MCF 10A (cell line): ENCODE measurements at regions of chr12 and their contacts with region 1.

Region 1: GRCh38 chr12:46473634-46474329 is 101.2 kb upstream of the SLC38A2 start:
- DNase-seq: peak; percentile 89
- H3K4me3 Mint-ChIP-seq: peak overlapping the region; percentile 58
- H3K27ac Mint-ChIP-seq: peak overlapping the region; percentile 94
- H3K4me1 Mint-ChIP-seq: peaks cover 44% of the 10 kb centered on the region
- H3K27me3 Mint-ChIP-seq: no peaks in the 10 kb centered on the region
- CTCF ChIP-seq: no peak

Region 2: DNA sequence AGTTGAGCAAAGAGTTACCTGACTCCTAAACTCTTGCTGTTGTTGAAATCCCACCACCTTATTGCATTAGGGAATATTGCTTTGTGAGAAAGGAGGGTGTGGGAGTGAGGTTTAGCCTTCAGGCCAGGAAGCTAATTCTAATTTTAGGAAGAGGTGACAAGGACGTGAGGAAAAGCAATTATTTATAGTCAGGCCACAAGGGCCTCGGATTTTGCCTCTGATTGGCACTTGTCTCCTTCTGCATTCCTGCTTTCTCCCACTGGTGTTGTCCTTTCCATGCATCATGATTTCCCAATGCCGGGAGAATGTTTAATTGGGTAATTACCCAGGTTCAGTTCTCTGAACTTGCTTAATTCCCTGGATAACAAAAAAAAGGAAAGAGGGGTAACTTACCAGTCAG is 63.3 kb before region 1 on chr12:
- CTCF ChIA-PET with region 1: no interaction called
- POLR2A ChIA-PET with region 1: no interaction called
- intact Hi-C with region 1: no loop called
- DNase-seq: peak; percentile 53
- H3K4me3 Mint-ChIP-seq: no peak overlapping the region
- H3K27ac Mint-ChIP-seq: no peak overlapping the region
- H3K4me1 Mint-ChIP-seq: peaks cover 30% of the 10 kb centered on the region
- H3K27me3 Mint-ChIP-seq: no peaks in the 10 kb centered on the region
- CTCF ChIP-seq: no peak

Region 3: DNA sequence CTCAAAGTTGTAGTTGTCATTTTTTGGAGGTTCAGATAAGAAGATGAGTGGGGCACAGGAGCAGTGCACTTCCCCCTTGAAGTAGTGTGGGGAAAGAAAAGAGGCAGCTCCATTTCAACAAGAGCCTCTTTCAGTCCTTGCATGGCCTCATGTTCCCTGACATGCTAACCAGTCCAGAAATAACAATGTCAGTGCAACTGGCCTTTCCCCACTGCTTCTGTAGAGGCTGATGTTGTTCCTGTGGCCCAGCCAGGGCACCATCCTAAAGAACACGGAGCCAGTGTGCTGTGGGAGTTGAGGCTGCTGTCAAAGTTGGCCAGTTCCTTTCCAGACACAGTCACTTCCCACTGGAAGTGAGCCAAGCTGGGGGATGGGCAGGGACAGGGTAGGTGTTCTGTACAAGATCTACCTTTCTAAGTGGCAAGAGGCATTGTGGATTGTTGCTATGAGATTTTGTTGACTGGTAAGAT is 23.5 kb before region 1 on chr12:
- CTCF ChIA-PET with region 1: interaction called, 3 read pairs
- POLR2A ChIA-PET with region 1: interaction called, 22 read pairs
- intact Hi-C with region 1: no loop called
- DNase-seq: peak; percentile 73
- H3K4me3 Mint-ChIP-seq: no peak overlapping the region
- H3K27ac Mint-ChIP-seq: peak overlapping the region; percentile 90
- H3K4me1 Mint-ChIP-seq: peaks cover 64% of the 10 kb centered on the region
- H3K27me3 Mint-ChIP-seq: no peaks in the 10 kb centered on the region
- CTCF ChIP-seq: no peak

Region 4: DNA sequence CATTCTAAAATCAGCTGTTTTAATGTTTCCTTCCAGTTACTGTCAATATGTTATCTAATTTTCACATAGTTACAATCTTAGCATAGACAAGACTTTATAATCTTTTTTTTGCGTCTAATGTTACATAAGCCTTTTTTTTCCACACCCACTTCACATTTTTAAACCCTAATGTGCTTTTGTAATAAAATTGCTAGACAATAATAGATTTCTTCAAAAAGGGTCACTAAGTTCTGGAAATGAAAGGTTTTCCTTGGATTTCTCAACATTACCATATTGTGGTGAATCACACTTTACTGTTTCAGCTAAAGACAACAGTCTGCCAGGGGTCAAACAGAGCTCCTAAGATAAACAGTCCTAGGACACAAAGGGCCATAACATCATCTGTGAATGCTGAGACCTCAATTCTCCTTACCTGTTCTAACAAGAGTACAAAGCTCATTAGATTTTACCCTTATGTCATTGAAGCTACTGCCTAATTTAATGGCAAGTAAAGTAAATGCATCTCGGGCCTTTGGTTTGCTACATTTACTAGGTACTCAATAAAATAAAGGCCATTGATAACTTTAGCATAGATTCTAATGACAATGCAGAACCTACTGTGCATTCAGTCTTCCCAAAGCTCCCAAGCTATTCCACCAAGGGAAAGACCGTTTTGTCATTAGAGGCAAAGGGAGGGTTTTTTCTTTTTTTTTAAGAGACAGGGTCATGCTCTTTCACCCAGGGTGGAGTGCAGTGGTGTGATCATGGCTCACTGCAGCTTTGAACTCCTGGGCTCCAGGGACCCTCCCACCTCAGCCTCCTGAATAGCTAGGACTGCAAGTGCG is 10.0 kb after region 1 on chr12:
- CTCF ChIA-PET with region 1: interaction called, 5 read pairs
- POLR2A ChIA-PET with region 1: interaction called, 21 read pairs
- intact Hi-C with region 1: no loop called
- DNase-seq: peak; percentile 73
- H3K4me3 Mint-ChIP-seq: no peak overlapping the region
- H3K27ac Mint-ChIP-seq: peak overlapping the region; percentile 57
- H3K4me1 Mint-ChIP-seq: peaks cover 9% of the 10 kb centered on the region
- H3K27me3 Mint-ChIP-seq: no peaks in the 10 kb centered on the region
- CTCF ChIP-seq: no peak

Region 5: DNA sequence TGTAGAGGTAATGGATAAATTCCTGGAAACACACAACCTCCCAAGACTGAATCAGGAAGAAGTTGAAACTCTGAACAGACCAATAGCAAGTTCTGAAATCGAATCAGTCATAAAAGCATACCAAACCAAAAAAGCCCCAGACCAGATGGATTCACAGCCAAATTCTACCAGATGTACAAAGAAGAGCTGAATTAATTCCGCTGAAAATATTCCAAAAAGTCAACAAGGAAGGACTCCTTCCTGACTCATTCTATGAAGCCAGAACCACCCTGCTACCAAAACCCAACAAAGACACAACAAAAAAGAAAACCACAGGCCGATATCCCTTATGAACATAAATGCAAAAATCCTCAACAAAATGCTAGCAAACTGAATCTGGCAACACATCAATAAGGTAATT is 270.5 kb after region 1 on chr12:
- CTCF ChIA-PET with region 1: no interaction called
- POLR2A ChIA-PET with region 1: no interaction called
- intact Hi-C with region 1: no loop called
- DNase-seq: no peak
- H3K4me3 Mint-ChIP-seq: no peak overlapping the region
- H3K27ac Mint-ChIP-seq: no peak overlapping the region
- H3K4me1 Mint-ChIP-seq: no peaks in the 10 kb centered on the region
- H3K27me3 Mint-ChIP-seq: no peaks in the 10 kb centered on the region
- CTCF ChIP-seq: no peak